ENCODE measurements at regions of chr12 and their contacts with region 1.

Region 1: DNA sequence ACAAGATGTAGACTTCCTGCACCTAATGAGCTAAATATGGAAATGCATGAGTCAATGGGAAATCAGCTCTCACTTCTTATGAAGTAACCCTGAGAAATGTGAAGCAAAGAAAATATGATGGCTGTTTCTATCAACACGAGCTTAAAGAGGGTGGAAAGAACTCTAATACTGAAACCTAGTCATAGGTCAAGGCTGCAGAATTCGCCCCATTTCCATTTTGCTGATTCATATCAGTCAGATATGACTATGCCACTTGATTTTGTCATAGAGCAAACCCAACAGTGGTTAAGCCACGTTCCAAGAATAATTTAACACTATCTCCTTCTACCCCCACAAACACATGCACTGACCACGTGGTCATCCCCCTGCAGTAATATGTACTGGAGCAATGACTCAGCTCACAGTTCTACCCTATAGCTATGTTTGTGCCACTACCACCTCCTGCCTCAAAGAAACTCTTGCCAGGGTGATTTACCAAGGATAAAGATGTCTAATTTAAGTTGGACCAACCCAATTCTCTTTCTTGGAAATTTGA is 157.5 kb downstream of the TMTC3 start:
- DNase-seq: peak; percentile 46
- H3K4me3 Mint-ChIP-seq: no peak overlapping the region
- H3K27ac Mint-ChIP-seq: peak overlapping the region; percentile 90
- H3K4me1 Mint-ChIP-seq: peaks cover 48% of the 10 kb centered on the region
- H3K27me3 Mint-ChIP-seq: no peaks in the 10 kb centered on the region

Region 2: DNA sequence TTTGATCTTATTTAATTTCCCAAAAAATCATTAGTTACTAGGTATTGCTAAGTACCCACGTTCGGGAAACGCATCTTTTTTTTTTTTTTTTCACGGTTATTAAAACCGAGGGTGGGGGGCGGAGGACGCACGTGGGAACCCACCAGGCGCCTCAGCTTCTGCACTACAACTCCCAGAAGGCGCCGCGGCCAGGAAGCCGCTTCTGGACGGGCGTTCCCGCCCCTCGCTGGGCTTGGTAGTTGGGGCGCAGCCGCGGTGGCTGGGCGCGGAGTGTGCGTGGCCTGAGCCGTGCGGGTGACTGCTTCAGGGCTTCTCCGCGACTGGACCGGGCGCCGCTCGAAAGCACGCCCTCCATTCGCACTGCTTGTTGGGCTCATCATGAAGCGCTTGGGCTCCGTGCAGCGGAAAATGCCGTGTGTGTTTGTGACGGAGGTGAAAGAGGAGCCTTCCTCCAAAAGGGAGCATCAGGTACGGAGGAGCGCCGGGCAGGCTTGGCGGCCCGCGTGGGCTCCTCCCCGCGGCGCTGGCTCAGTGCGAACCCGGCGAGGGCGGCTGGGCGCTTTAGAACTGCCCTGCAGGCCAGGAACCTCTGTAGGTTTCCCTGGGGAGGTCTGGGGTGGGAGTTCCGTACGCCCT is 264.2 kb before region 1 on chr12:
- intact Hi-C with region 1: loop called (anchors 2 kb)
- DNase-seq: peak; percentile 84
- H3K4me3 Mint-ChIP-seq: peak overlapping the region; percentile 99
- H3K27ac Mint-ChIP-seq: peak overlapping the region; percentile 95
- H3K4me1 Mint-ChIP-seq: peaks cover 45% of the 10 kb centered on the region
- H3K27me3 Mint-ChIP-seq: no peaks in the 10 kb centered on the region

Region 3: DNA sequence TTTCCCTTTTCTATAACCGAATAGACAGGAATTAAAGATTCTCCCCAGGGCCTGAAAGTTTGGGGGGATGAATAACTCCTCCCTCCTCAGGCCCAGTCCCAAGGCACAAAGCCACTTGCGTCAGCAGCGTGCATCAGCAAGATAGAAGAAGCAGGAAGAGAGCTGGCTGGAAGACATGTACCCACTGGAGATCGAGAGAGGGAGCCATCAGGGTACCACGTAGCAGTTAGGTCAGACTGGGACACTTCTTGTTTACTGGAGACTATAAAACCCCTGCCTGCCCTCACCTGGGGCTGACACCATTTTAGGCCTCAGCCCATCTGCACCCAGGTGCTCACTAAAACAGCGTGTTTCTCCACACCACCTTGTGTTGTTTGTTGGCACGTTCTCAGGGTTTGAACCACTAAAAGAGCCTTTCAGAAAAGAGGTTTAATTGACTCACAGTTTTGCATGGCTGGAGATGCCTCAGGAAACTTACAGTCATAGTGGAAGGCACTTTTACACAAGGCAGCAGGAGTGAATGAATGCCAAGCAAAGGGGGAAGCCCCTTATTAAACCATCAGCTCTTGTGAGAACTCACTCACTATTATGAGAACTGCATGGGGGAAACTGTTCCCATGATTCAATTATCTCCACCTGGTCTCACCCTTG is 64.3 kb before region 1 on chr12:
- intact Hi-C with region 1: loop called (anchors 1 kb)
- DNase-seq: no peak
- H3K4me3 Mint-ChIP-seq: no peak overlapping the region
- H3K27ac Mint-ChIP-seq: peak overlapping the region; percentile 34
- H3K4me1 Mint-ChIP-seq: peaks cover 30% of the 10 kb centered on the region
- H3K27me3 Mint-ChIP-seq: no peaks in the 10 kb centered on the region

Region 4: DNA sequence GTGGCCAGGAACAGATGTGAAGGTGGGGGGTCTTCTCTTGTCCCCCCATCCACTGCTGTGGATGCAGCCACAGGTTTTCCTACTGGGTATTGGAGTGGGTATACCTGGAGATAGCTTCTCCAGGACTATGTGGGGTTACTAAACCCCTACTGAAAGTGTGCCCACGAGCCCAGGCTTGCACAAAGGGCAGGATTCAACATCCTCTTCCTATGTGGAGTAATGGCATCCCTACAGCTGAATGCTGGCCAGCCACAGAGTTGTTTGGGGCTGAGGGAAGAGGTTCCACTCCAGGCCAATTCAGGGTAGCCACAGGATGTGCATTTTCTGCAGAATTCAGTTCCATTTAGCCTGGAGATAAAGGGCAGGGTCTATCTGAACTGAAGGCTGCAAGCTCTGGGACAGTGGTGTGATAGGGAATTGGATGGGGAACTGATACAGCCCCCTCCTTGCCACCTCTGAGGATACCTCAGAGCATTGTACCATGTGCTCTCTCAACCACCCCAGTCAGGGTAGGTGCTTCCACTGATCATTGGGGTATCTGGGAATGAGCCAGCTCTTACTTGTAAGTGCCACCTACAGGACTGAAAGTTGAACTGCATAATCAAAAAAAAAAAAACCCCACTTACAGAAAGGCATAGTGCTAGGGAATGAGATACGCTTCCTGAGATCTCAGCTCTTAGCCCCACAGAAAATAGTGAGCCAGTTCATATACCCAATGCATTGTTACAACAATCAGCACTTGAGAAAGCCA is 93.6 kb after region 1 on chr12:
- intact Hi-C with region 1: loop called (anchors 1 kb)
- DNase-seq: no peak
- H3K4me3 Mint-ChIP-seq: no peak overlapping the region
- H3K27ac Mint-ChIP-seq: no peak overlapping the region
- H3K4me1 Mint-ChIP-seq: peaks cover 36% of the 10 kb centered on the region
- H3K27me3 Mint-ChIP-seq: peaks cover 4% of the 10 kb centered on the region

Region 5: GRCh38 chr12:89040146-89040964 is 740.7 kb after region 1 on chr12:
- intact Hi-C with region 1: loop called (anchors 2 kb)
- DNase-seq: peak; percentile 83
- H3K4me3 Mint-ChIP-seq: peak overlapping the region; percentile 50
- H3K27ac Mint-ChIP-seq: peak overlapping the region; percentile 94
- H3K4me1 Mint-ChIP-seq: peaks cover 67% of the 10 kb centered on the region
- H3K27me3 Mint-ChIP-seq: no peaks in the 10 kb centered on the region

Region 6: DNA sequence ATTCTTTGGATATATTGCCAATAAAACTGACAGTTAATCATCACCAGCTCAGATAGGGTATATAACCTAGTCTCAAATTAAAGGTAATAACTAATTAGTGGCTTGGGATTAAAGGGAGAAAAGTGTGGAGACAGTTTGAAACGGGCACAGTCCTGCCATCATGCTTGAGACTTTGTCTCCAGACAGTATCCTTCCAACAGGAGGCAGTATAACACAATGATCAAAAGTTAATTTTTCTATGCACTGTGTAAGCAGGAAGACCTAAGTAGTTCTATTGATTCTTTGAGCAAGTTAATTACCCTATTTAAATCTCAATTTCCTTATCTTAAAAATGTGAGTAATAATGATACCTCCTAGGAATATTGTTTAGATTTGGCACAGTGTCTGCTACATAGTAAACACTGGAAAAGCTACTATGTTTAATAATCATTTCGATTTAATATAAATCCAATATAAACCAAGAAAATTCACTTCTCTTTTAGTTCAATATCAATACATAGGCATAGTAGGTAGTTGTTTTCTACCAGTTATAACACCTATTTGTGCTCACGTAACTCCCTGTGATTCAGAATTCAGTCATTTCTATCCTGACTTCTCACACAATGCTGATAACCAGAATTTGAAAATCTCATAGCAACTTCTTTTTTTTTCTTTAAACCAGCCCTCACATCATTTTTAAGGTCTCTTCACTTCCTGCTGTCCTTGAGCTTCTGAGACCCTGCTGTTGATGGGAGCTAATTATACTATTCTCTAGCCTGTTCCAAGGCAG is 1171.3 kb after region 1 on chr12:
- intact Hi-C with region 1: loop called (anchors 5 kb)
- DNase-seq: no peak
- H3K4me3 Mint-ChIP-seq: no peak overlapping the region
- H3K27ac Mint-ChIP-seq: peak overlapping the region; percentile 63
- H3K4me1 Mint-ChIP-seq: peaks cover 65% of the 10 kb centered on the region
- H3K27me3 Mint-ChIP-seq: no peaks in the 10 kb centered on the region

Measured in activated T-helper 2 cell treated with anti-CD3 and anti-CD28 coated beads, Interferon-gamma antibody, Interleukin-2, Interleukin-4, amounts not matched to agents 10 μg/mL and 5 μg/mL and 100 μg/mL, durations not matched to agents 14 hours and 24 hours and 36 hours (primary cell).